Activated CD4-positive, alpha-beta T cell treated with anti-CD3 and anti-CD28 coated beads, Interleukin-2, amount 10 ng/mL, durations not matched to agents 24 days and 14 days (primary cell): ENCODE measurements at regions of chr3 and their contacts with region 1.

Region 1: GRCh38 chr3:112734718-112735350 is 93.9 kb upstream of the CCDC80 start:
- DNase-seq: peak; percentile 90
- H3K4me3 Mint-ChIP-seq: no peak overlapping the region
- H3K27ac Mint-ChIP-seq: no peak overlapping the region
- H3K4me1 Mint-ChIP-seq: peaks cover 42% of the 10 kb centered on the region
- H3K27me3 Mint-ChIP-seq: no peaks in the 10 kb centered on the region

Region 2: DNA sequence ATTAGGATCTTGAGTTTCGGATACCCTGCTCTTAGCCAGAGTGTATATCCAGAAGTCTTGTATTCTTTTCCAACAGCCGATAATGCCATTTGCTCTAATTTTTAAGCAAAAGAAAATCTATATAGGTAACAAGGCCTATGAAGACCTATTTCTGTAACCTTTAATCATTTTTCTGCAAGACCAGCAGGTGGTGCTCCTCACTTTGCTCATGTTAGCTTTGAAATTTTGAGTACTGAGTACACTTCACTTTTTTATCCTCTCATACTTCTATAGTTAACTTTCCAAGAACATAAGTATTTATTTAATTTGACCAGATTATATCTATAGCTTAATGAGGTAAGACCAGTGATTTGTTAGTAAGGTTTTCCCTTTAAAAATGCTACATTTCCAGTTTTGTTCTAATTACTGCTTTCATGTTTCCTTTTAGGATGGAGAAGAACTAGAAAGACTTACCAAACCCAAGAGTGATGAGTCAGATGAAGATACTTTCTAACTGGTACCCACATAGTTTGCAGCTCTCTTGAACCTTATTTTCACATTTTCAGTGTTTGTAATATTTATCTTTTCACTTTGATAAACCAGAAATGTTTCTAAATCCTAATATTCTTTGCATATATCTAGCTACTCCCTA is 152.5 kb before region 1 on chr3:
- intact Hi-C with region 1: loop called (anchors 5 kb)
- DNase-seq: peak; percentile 79
- H3K4me3 Mint-ChIP-seq: no peak overlapping the region
- H3K27ac Mint-ChIP-seq: no peak overlapping the region
- H3K4me1 Mint-ChIP-seq: peaks cover 3% of the 10 kb centered on the region
- H3K27me3 Mint-ChIP-seq: no peaks in the 10 kb centered on the region

Region 3: DNA sequence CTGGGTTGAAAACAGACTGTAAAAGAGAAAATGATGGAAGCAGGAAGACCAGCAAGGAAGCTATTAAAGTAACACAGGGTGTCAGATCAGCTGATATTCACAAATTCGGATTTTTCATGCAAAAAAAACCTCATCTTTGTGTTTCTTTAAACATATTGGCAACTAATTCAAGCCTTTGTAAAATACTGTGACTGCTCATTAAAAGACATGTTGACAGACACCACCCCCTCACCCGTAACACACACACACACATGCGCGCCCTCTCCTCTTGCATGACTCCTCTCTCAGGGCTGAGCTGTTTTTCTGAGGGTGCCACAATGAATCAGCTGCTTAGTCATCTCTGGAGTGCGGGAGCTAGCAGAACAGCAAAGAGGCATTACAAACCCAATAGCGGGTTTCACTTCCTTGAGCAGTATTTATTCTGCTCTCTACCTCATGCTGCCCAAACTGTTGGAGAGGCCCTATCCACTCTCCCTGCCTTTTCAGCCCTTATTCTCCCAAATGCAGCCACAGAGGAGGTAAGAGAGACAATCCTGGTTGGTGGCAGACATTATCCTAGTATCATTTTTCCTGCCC is 58.1 kb before region 1 on chr3:
- intact Hi-C with region 1: loop called (anchors 2 kb)
- DNase-seq: peak; percentile 96
- H3K4me3 Mint-ChIP-seq: peak overlapping the region; percentile 60
- H3K27ac Mint-ChIP-seq: peak overlapping the region; percentile 90
- H3K4me1 Mint-ChIP-seq: peaks cover 62% of the 10 kb centered on the region
- H3K27me3 Mint-ChIP-seq: peaks cover 2% of the 10 kb centered on the region

Region 4: DNA sequence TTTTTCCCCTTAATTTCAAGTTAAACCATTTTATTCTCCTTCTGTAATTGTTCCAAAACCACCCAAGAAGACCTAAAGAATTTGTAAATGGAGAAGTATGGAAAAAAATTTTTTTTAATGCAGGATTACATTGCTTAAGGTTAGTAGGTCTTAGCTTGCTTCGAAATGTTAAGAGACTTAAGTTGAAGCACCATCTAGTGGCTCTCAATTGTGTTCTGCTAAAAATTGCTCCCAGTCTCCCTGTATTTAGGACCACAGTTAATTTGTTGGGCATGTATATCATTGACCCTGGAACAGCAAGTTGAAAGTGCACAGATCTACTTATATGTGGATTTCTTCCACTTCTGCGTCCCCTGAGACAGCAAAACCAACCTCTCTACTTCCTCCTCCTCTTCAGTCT is 79.4 kb after region 1 on chr3:
- intact Hi-C with region 1: loop called (anchors 5 kb)
- DNase-seq: no peak
- H3K4me3 Mint-ChIP-seq: no peak overlapping the region
- H3K27ac Mint-ChIP-seq: no peak overlapping the region
- H3K4me1 Mint-ChIP-seq: peaks cover 17% of the 10 kb centered on the region
- H3K27me3 Mint-ChIP-seq: peaks cover 3% of the 10 kb centered on the region

Region 5: GRCh38 chr3:112973325-112974177 is 238.7 kb after region 1 on chr3:
- intact Hi-C with region 1: loop called (anchors 1 kb)
- DNase-seq: peak; percentile 86
- H3K4me3 Mint-ChIP-seq: peak overlapping the region; percentile 85
- H3K27ac Mint-ChIP-seq: peak overlapping the region; percentile 93
- H3K4me1 Mint-ChIP-seq: peaks cover 67% of the 10 kb centered on the region
- H3K27me3 Mint-ChIP-seq: no peaks in the 10 kb centered on the region

Region 6: GRCh38 chr3:113005611-113006010 is 270.8 kb after region 1 on chr3:
- intact Hi-C with region 1: loop called (anchors 1 kb)
- DNase-seq: peak; percentile 77
- H3K4me3 Mint-ChIP-seq: peak overlapping the region; percentile 77
- H3K27ac Mint-ChIP-seq: peak overlapping the region; percentile 88
- H3K4me1 Mint-ChIP-seq: peaks cover 56% of the 10 kb centered on the region
- H3K27me3 Mint-ChIP-seq: no peaks in the 10 kb centered on the region